K562 (cell line): ENCODE measurements at regions of chr9 and their contacts with region 1.

Region 1: DNA sequence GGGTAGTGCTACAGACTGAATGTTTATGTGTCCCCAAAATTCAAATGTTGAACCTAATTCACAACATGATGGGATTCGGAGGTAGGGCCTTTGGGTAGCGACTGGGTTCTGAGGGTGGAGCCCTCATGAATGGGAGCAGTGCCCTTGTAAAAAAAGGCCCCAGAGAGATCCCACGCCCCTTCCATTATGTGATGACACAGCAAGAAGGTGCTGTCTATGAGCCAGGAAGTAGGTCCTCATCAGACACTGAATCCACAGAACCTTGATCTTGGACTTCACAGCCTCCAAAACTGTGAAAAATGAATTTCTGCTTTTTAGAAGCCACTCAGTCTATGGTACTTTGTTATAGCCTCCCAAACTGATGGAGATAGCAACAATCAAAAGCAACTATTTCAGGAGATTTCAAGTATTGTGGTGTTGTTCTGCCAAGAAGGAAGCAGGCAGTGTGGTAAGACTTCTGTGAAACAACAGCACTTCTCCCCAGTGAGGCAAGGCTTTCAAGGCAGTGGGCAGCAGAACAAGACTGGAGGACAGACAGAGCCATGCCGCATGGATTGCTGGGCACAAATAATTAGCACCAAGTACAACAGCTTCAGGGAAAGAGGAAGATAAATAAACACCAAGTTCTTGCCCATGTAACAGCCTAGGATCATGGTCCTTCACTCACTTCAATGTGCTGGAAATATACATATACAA is 76.1 kb downstream of the OR2K2 start:
- DNase-seq: no peak
- ATAC-seq: no peak
- H3K4me3 ChIP-seq: no peak overlapping the region
- H3K27ac ChIP-seq: no peak overlapping the region
- H3K4me1 ChIP-seq: no peaks in the 10 kb centered on the region
- H3K27me3 ChIP-seq: no peaks in the 10 kb centered on the region
- CTCF ChIP-seq: no peak
- EP300 ChIP-seq: no peak
- POLR2A ChIP-seq: no peak
- RAD21 ChIP-seq: no peak

Region 2: GRCh38 chr9:111078391-111079038 is 175.4 kb before region 1 on chr9:
- CTCF ChIA-PET with region 1: no interaction called
- POLR2A ChIA-PET with region 1: no interaction called
- in situ Hi-C with region 1: no loop called
- intact Hi-C with region 1: no loop called
- DNase-seq: no peak
- ATAC-seq: no peak
- H3K4me3 ChIP-seq: no peak overlapping the region
- H3K27ac ChIP-seq: no peak overlapping the region
- H3K4me1 ChIP-seq: no peaks in the 10 kb centered on the region
- H3K27me3 ChIP-seq: no peaks in the 10 kb centered on the region
- CTCF ChIP-seq: no peak
- EP300 ChIP-seq: no peak
- POLR2A ChIP-seq: no peak
- RAD21 ChIP-seq: no peak

Region 3: GRCh38 chr9:111151536-111151935 is 102.4 kb before region 1 on chr9:
- CTCF ChIA-PET with region 1: no interaction called
- POLR2A ChIA-PET with region 1: no interaction called
- in situ Hi-C with region 1: no loop called
- intact Hi-C with region 1: loop called (anchors 10 kb)
- DNase-seq: no peak
- ATAC-seq: no peak
- H3K4me3 ChIP-seq: no peak overlapping the region
- H3K27ac ChIP-seq: no peak overlapping the region
- H3K4me1 ChIP-seq: no peaks in the 10 kb centered on the region
- H3K27me3 ChIP-seq: no peaks in the 10 kb centered on the region
- CTCF ChIP-seq: no peak
- EP300 ChIP-seq: no peak
- POLR2A ChIP-seq: no peak
- RAD21 ChIP-seq: no peak

Region 4: DNA sequence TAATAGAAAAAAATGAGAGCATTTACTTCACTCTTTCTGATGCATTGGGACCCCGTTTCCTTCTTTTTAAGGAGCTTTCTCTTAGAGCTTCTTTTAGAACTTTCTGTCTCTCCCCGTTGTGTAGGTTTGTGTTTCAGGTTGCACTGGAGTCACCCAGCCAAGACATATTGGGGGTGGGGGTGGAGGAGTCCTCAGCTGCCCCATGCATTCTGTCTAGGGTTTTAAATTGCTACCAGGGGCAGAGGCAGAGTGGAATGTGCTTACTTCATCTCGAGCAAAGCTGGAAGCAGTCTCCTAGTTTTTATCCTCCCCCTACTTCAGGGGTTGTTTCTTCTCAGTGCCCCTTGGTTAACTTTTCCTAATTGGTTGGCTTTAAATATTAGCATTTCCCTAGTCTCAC is 66.7 kb after region 1 on chr9:
- CTCF ChIA-PET with region 1: no interaction called
- POLR2A ChIA-PET with region 1: no interaction called
- in situ Hi-C with region 1: no loop called
- intact Hi-C with region 1: no loop called
- DNase-seq: no peak
- ATAC-seq: no peak
- H3K4me3 ChIP-seq: no peak overlapping the region
- H3K27ac ChIP-seq: no peak overlapping the region
- H3K4me1 ChIP-seq: no peaks in the 10 kb centered on the region
- H3K27me3 ChIP-seq: no peaks in the 10 kb centered on the region
- CTCF ChIP-seq: no peak
- EP300 ChIP-seq: no peak
- POLR2A ChIP-seq: no peak
- RAD21 ChIP-seq: no peak

Region 5: GRCh38 chr9:111438541-111439235 is 184.8 kb after region 1 on chr9:
- CTCF ChIA-PET with region 1: no interaction called
- POLR2A ChIA-PET with region 1: no interaction called
- in situ Hi-C with region 1: no loop called
- intact Hi-C with region 1: no loop called
- DNase-seq: no peak
- ATAC-seq: no peak
- H3K4me3 ChIP-seq: no peak overlapping the region
- H3K27ac ChIP-seq: no peak overlapping the region
- H3K4me1 ChIP-seq: no peaks in the 10 kb centered on the region
- H3K27me3 ChIP-seq: no peaks in the 10 kb centered on the region
- CTCF ChIP-seq: no peak
- EP300 ChIP-seq: no peak
- POLR2A ChIP-seq: no peak
- RAD21 ChIP-seq: no peak